Activated CD4-positive, alpha-beta T cell treated with anti-CD3 and anti-CD28 coated beads, Interleukin-2, amount 10 ng/mL, durations not matched to agents 7 days and 5 days (primary cell): ENCODE measurements at regions of chr2 and their contacts with region 1.

Region 1: GRCh38 chr2:27281855-27282559 is at the start of gene TRIM54:
- DNase-seq: no peak
- H3K4me3 Mint-ChIP-seq: no peak within 1 kb of the TSS
- H3K27ac Mint-ChIP-seq: no peak within 1 kb of the TSS
- H3K4me1 Mint-ChIP-seq: peaks cover 6% of the 10 kb centered on the region
- H3K27me3 Mint-ChIP-seq: peaks cover 24% of the 10 kb centered on the region
- total RNA-seq, gene TRIM54: not detected

Region 2: GRCh38 chr2:27249891-27250651 is 31.9 kb before region 1 on chr2:
- CTCF ChIA-PET with region 1: interaction called, 12 read pairs
- POLR2A ChIA-PET with region 1: no interaction called
- DNase-seq: peak; percentile 45
- H3K4me3 Mint-ChIP-seq: no peak overlapping the region
- H3K27ac Mint-ChIP-seq: no peak overlapping the region
- H3K4me1 Mint-ChIP-seq: no peaks in the 10 kb centered on the region
- H3K27me3 Mint-ChIP-seq: peaks cover 16% of the 10 kb centered on the region

Region 3: DNA sequence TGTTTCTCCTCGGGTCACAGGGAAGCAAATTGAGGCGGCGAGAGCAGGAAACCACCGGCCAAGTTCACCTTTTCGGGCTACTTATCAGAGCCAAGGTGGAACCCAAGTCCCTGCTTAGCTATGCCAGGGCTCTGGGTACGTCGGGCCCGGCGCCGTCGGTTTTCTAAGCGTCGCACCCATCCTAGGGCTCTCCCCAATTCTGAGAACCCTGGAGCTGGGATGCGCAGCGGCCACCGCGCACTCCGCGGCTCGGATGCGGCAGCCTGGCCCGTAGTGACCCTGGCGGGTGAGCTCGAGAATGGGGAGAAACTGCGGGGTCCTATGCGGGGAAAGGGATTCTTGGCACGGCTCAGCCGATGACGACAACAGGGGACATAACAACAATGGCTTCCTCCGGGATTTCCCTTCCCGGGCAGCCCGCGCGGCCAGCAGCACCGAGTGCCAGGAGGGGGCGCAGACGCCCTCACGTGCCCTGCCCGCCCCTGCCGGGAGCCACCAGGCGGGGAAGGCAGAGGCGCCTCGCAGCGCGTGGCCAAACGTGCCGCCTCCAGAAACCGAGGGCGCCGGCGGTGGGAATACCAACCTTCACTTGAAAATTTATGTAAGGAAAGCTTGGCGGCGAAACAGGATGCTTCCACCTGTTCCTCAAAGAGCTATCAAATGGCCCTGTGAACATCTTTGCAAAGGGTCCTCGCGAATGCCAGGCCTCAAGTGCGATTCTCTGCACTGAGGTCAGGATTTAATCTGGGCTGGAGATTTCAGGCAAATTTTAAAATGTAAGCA is 17.1 kb before region 1 on chr2:
- CTCF ChIA-PET with region 1: interaction called, 19 read pairs
- POLR2A ChIA-PET with region 1: no interaction called
- DNase-seq: peak; percentile 51
- H3K4me3 Mint-ChIP-seq: peak overlapping the region; percentile 39
- H3K27ac Mint-ChIP-seq: no peak overlapping the region
- H3K4me1 Mint-ChIP-seq: peaks cover 27% of the 10 kb centered on the region
- H3K27me3 Mint-ChIP-seq: peaks cover 45% of the 10 kb centered on the region

Region 4: GRCh38 chr2:27270670-27271069 is 11.3 kb before region 1 on chr2:
- CTCF ChIA-PET with region 1: interaction called, 19 read pairs
- POLR2A ChIA-PET with region 1: no interaction called
- DNase-seq: no peak
- H3K4me3 Mint-ChIP-seq: no peak overlapping the region
- H3K27ac Mint-ChIP-seq: no peak overlapping the region
- H3K4me1 Mint-ChIP-seq: peaks cover 3% of the 10 kb centered on the region
- H3K27me3 Mint-ChIP-seq: peaks cover 25% of the 10 kb centered on the region